MCF 10A (cell line): ENCODE measurements at regions of chr13 and their contacts with region 1.

Region 1: GRCh38 chr13:32019612-32020233 is 11.9 kb upstream of the FRY start:
- DNase-seq: peak; percentile 63
- H3K4me3 Mint-ChIP-seq: no peak overlapping the region
- H3K27ac Mint-ChIP-seq: no peak overlapping the region
- H3K4me1 Mint-ChIP-seq: no peaks in the 10 kb centered on the region
- H3K27me3 Mint-ChIP-seq: no peaks in the 10 kb centered on the region
- CTCF ChIP-seq: peak; percentile 64

Region 2: DNA sequence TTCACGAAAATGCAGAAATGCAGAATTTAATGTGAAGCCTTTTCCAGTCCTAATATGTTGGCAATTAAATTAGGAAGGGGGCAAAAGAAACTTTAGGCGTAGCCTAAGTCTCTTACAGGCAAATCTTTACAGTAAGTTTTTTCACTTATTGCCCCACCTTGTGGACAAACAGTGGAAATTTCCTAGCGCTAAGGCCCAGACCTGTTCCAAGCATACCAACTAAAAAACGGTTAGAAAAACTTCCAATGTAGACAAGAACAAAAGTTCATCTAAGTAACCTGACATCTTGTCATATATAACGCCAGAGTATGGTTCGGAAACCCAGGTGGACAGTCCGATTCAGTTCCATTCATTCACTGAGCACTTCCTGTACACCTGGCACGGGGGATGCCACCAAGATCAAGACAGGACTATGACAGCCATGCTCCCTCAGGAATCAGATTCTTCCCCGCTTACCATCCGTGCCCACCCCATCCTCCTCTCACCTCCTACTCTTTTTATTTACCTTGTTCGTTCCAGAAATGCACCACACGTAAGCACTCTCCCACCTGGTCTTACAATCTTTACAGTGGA is 290.5 kb after region 1 on chr13:
- CTCF ChIA-PET with region 1: interaction called, 9 read pairs
- POLR2A ChIA-PET with region 1: no interaction called
- intact Hi-C with region 1: loop called (anchors 1 kb)
- DNase-seq: peak; percentile 72
- H3K4me3 Mint-ChIP-seq: no peak overlapping the region
- H3K27ac Mint-ChIP-seq: no peak overlapping the region
- H3K4me1 Mint-ChIP-seq: no peaks in the 10 kb centered on the region
- H3K27me3 Mint-ChIP-seq: no peaks in the 10 kb centered on the region
- CTCF ChIP-seq: peak; percentile 54